PC-9 (cell line): ENCODE measurements at regions of chr19 and their contacts with region 1.

Region 1: GRCh38 chr19:5439452-5439851 is 15.8 kb upstream of the ZNRF4 start:
- DNase-seq: no peak
- H3K4me3 ChIP-seq: no peak overlapping the region
- H3K27ac ChIP-seq: no peak overlapping the region
- H3K4me1 ChIP-seq: no peaks in the 10 kb centered on the region
- H3K27me3 ChIP-seq: no peaks in the 10 kb centered on the region
- CTCF ChIP-seq: no peak

Region 2: GRCh38 chr19:5138606-5139582 is 300.6 kb before region 1 on chr19:
- CTCF ChIA-PET with region 1: no interaction called
- POLR2A ChIA-PET with region 1: no interaction called
- intact Hi-C with region 1: no loop called
- DNase-seq: no peak
- H3K4me3 ChIP-seq: no peak overlapping the region
- H3K27ac ChIP-seq: no peak overlapping the region
- H3K4me1 ChIP-seq: no peaks in the 10 kb centered on the region
- H3K27me3 ChIP-seq: no peaks in the 10 kb centered on the region
- CTCF ChIP-seq: no peak

Region 3: DNA sequence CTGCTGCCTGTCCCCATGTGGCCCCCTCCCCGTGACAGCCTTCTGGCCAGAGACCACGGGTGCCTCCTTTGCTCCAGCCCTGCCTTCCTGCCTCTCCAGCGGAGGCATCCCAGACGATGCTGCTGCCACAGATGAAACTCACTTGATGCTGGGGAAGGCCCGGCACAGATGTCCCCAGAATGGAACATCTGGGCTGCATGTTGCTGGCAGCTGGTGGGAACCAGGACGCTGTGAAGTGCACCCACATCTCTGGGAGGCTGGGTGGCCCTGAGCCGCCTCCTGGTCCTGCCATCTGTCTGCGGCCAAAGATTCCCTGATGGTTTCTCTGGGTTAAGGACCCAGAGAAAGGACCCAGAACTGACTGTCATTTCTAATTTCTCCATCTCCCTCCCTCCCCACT is 47.0 kb before region 1 on chr19:
- CTCF ChIA-PET with region 1: no interaction called
- POLR2A ChIA-PET with region 1: no interaction called
- intact Hi-C with region 1: no loop called
- DNase-seq: no peak
- H3K4me3 ChIP-seq: no peak overlapping the region
- H3K27ac ChIP-seq: no peak overlapping the region
- H3K4me1 ChIP-seq: no peaks in the 10 kb centered on the region
- H3K27me3 ChIP-seq: peaks cover 30% of the 10 kb centered on the region
- CTCF ChIP-seq: no peak

Region 4: GRCh38 chr19:5403968-5404640 is 35.3 kb before region 1 on chr19:
- CTCF ChIA-PET with region 1: no interaction called
- POLR2A ChIA-PET with region 1: interaction called, 10 read pairs
- intact Hi-C with region 1: no loop called
- DNase-seq: peak; percentile 60 to 76
- H3K4me3 ChIP-seq: no peak overlapping the region
- H3K27ac ChIP-seq: no peak overlapping the region
- H3K4me1 ChIP-seq: no peaks in the 10 kb centered on the region
- H3K27me3 ChIP-seq: peaks cover 36% of the 10 kb centered on the region
- CTCF ChIP-seq: no peak

Region 5: GRCh38 chr19:5417495-5418436 is 21.7 kb before region 1 on chr19:
- CTCF ChIA-PET with region 1: no interaction called
- POLR2A ChIA-PET with region 1: no interaction called
- intact Hi-C with region 1: no loop called
- DNase-seq: no peak
- H3K4me3 ChIP-seq: no peak overlapping the region
- H3K27ac ChIP-seq: no peak overlapping the region
- H3K4me1 ChIP-seq: no peaks in the 10 kb centered on the region
- H3K27me3 ChIP-seq: peaks cover 76% of the 10 kb centered on the region
- CTCF ChIP-seq: no peak